ENCODE measurements at regions of chr22 and their contacts with region 1.

Region 1: DNA sequence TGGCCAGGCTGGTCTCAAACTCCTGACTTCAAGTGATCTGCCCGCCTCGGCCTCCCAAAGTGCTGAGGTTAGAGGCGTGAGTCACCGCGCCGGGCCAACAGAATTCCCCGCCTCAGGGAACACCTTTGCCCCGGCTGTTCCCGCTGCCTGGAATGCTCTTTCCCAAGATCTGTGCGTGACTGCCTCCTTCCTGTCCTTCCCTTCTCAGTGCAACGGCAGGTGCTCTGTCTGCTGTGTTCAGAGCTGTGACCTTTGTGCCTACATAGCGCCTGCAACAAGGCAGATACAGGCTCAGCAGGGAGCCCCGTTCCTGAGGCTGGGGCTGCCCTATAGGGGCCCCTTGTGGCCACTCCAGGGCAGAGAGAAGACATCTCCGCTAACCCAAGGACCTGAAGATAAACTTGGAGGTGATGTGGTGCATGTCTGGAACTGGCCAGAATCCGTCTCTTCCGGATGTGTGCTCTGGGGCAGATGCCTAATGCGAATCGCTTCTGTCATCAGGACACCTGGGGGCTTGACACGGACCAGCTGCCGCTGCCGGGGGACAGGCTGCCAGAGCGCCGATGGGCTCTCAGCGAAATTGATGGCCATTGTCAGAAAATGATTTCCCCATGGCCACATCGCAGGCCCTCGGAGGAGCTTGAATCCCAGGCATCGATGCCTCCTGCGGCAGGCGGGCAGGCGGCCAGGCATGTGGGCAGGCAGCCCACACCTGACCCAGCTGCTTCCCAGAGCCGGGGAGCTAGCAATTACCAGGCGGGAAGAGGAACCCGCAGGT is 43.5 kb upstream of the TCF20 start:
- DNase-seq: no peak
- ATAC-seq: peak; percentile 64
- H3K4me3 Mint-ChIP-seq: no peak overlapping the region
- H3K27ac Mint-ChIP-seq: no peak overlapping the region
- H3K4me1 Mint-ChIP-seq: peaks cover 15% of the 10 kb centered on the region
- H3K27me3 Mint-ChIP-seq: peaks cover 24% of the 10 kb centered on the region
- CTCF ChIP-seq: no peak

Region 2: DNA sequence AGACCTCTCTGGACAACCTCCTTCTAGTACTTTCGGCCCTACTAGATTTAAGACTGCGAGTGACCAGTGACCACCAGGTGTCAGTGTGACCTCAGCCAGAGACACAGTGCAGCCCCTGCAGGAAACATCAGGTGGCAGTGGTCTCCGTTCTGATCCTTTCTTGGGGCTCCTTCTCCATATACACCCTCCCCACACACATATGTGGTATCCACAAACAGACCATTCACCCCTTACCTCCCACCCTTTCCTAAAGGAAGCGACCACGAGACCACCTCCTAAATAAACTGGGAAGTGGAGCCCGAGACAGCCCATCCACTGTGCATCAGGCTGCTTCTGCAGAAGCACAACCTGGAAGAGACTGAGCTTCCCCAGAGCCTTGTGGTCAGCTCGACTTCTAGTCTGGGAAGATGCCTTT is 144.9 kb before region 1 on chr22:
- CTCF ChIA-PET with region 1: interaction called, 3 read pairs
- POLR2A ChIA-PET with region 1: interaction called, 4 read pairs
- intact Hi-C with region 1: loop called (anchors 1 kb)
- DNase-seq: peak; percentile 48
- ATAC-seq: peak; percentile 79
- H3K4me3 Mint-ChIP-seq: no peak overlapping the region
- H3K27ac Mint-ChIP-seq: no peak overlapping the region
- H3K4me1 Mint-ChIP-seq: peaks cover 34% of the 10 kb centered on the region
- H3K27me3 Mint-ChIP-seq: no peaks in the 10 kb centered on the region
- CTCF ChIP-seq: no peak

Region 3: DNA sequence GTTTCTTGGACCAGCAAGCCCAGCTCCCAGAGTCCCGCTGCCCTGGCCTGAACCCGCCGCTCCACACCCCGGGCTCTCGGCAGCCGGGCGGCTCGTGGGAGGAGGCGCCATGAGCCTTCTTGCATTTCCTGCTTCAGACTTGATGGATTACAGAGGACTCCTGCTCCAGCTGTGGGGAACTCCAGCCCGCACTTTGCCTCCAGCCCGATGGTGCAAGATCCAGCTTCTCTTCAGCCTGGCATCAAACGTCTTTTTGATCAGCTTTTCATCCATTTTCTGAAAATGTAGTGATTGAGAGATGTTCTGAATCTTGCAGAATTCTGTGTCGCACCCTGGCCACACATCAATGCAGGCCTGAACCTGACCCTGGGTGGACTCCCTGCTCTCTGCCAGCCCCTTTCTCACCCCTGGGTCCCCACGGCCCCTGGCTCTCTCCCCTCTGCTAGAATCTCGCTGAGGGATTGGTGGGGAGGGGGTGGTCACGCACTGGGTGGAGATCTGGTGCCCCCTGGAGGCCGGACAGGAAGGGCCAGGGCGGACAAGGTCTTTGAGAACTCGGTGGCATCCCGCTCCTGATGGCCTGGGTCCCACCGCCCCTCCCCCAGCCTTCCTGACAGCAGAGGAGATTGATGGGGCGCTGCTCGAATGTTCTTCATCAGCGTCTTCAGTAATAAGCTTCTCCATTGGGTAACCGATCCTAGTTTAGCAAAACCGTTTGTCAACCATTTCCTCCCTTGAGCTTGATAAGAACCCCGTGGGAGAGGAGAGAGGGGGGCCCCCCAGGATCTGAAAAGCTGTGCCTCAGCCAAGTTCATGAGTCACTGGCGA is 130.3 kb after region 1 on chr22:
- CTCF ChIA-PET with region 1: no interaction called
- POLR2A ChIA-PET with region 1: no interaction called
- intact Hi-C with region 1: no loop called
- DNase-seq: peak; percentile 58
- ATAC-seq: peak; percentile 84
- H3K4me3 Mint-ChIP-seq: peak overlapping the region; percentile 69
- H3K27ac Mint-ChIP-seq: no peak overlapping the region
- H3K4me1 Mint-ChIP-seq: peaks cover 33% of the 10 kb centered on the region
- H3K27me3 Mint-ChIP-seq: peaks cover 7% of the 10 kb centered on the region
- CTCF ChIP-seq: no peak